Astrocyte of the cerebellum (primary cell): ENCODE measurements at regions of chr19 and their contacts with region 1.

Region 1: DNA sequence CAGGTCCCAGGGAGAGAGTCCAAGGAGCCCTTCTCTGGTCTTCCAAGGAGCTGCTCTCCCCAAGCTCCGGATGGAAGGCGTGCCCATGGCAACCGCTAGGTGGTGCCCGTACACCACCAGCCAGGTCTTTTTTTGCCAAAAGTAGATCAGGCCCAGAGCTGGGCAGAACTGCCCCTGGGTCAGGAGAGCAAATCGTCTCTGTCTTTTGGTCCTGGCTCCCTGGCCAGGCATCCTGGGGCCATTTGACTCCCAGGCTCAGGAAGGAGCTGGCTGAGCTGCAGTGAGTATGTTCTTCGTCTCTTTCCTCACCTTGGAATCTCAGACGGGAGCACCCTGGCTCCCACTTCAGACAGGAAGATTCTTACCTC is 24.6 kb upstream of the BCL3 start:
- DNase-seq: peak; percentile 52
- H3K4me3 ChIP-seq: no peak overlapping the region
- CTCF ChIP-seq: peak; percentile 97

Region 2: GRCh38 chr19:44845612-44846454 is 121.9 kb after region 1 on chr19 and contains the start of gene NECTIN2:
- in situ Hi-C with region 1: loop called (anchors 25 kb)
- DNase-seq: peak; percentile 97
- H3K4me3 ChIP-seq: peak within 1 kb of the TSS; percentile 97
- CTCF ChIP-seq: peak; percentile 79